ENCODE measurements at regions of chr6 and their contacts with region 1.

Region 1: GRCh38 chr6:111483736-111484632 is 966 bp upstream of the REV3L start:
- DNase-seq: peak; percentile 73 to 91 (median 88)
- H3K4me3 ChIP-seq: peak overlapping the region; percentile 59 to 98 (median 89)
- H3K27ac ChIP-seq: peak overlapping the region; percentile 94 to 100 (median 99)
- H3K27me3 ChIP-seq: no peaks in the 10 kb centered on the region
- CTCF ChIP-seq: peak in 11 of 56 donors; percentile 5 to 27 (median 8)

Region 2: GRCh38 chr6:111361648-111362047 is 122.3 kb before region 1 on chr6:
- intact Hi-C with region 1: loop called (anchors 5 kb)
- DNase-seq: peak in 6 of 10 donors; percentile 25 to 58 (median 42)
- H3K4me3 ChIP-seq: no peak overlapping the region
- H3K27ac ChIP-seq: no peak overlapping the region
- H3K27me3 ChIP-seq: no peaks in the 10 kb centered on the region
- CTCF ChIP-seq: peak in 55 of 56 donors; percentile 37 to 79 (median 60)

Region 3: DNA sequence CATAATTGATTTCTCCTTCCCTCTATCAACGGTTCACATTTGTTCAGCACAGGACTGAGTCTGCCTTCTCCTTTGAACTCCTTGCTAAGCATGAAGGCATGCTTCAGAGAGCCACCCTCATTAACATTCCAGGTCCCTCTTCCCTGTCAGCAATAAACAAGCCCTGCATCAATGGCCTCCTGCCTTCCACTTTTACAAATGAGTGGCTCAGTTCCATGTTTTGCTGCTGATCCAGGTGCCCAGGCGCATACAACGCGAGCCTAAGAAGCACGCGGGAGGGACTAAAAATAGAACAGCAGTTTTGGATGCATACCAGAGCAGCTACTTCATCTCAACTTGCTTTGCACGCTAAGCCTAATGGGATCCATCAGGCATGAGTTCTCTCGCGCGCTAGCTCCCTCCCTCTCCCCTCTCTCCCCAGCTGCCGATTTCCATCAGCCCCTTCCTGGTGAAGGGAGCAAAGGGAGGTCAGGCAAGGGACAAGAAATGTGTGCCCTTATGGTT is 68.3 kb after region 1 on chr6:
- intact Hi-C with region 1: loop called in 1 of 2 experiments (anchors 5 kb)
- DNase-seq: peak in 9 of 10 donors; percentile 52 to 77 (median 63)
- H3K4me3 ChIP-seq: peak overlapping the region in 46 of 59 donors; percentile 1 to 54 (median 26)
- H3K27ac ChIP-seq: peak overlapping the region in 57 of 59 donors; percentile 7 to 89 (median 79)
- H3K27me3 ChIP-seq: no peaks in the 10 kb centered on the region
- CTCF ChIP-seq: no peak

Region 4: GRCh38 chr6:111605100-111605751 is 121.2 kb after region 1 on chr6:
- intact Hi-C with region 1: loop called (anchors 2 to 10 kb)
- DNase-seq: peak in 2 of 10 donors; percentile 24 to 52
- H3K4me3 ChIP-seq: peak overlapping the region; percentile 43 to 82 (median 62)
- H3K27ac ChIP-seq: peak overlapping the region; percentile 24 to 97 (median 87)
- H3K27me3 ChIP-seq: no peaks in the 10 kb centered on the region
- CTCF ChIP-seq: no peak

Region 5: GRCh38 chr6:112043032-112044007 is 559.3 kb after region 1 on chr6:
- intact Hi-C with region 1: loop called (anchors 1 to 5 kb)
- DNase-seq: peak; percentile 88 to 95 (median 92)
- H3K4me3 ChIP-seq: peak overlapping the region; percentile 41 to 83 (median 67)
- H3K27ac ChIP-seq: peak overlapping the region; percentile 10 to 97 (median 87)
- H3K27me3 ChIP-seq: no peaks in the 10 kb centered on the region
- CTCF ChIP-seq: peak; percentile 83 to 99 (median 93)

Region 6: GRCh38 chr6:112253841-112254816 is 770.1 kb after region 1 on chr6 and contains the start of gene LAMA4:
- intact Hi-C with region 1: no loop called
- DNase-seq: peak in 7 of 10 donors; percentile 11 to 61 (median 45)
- H3K4me3 ChIP-seq: peak within 1 kb of the TSS; percentile 48 to 95 (median 72)
- H3K27ac ChIP-seq: peak within 1 kb of the TSS in 58 of 59 donors; percentile 33 to 93 (median 84)
- H3K27me3 ChIP-seq: peaks cover 0 to 6% (median 0%) of the 10 kb centered on the region in 45 donors
- CTCF ChIP-seq: no peak
- total RNA-seq, gene LAMA4: 11.7 to 46.8 (median 26.5) TPM

Measured in dorsolateral prefrontal cortex (tissue), 120 donors.